ENCODE measurements at regions of chr19 and their contacts with region 1.

Region 1: GRCh38 chr19:35509861-35510625 is 3.4 kb downstream of the DMKN start:
- DNase-seq: peak; percentile 75
- ATAC-seq: peak; percentile 85
- H3K4me3 ChIP-seq: peak overlapping the region; percentile 65 to 78 (median 69)
- H3K27ac ChIP-seq: peak overlapping the region; percentile 58
- H3K4me1 ChIP-seq: peaks cover 55% of the 10 kb centered on the region
- H3K27me3 ChIP-seq: peaks cover 1 to 28% of the 10 kb centered on the region in 2 experiments; a peak in 2 of 5 replicates
- CTCF ChIP-seq: peak; percentile 97
- EP300 ChIP-seq: no peak
- POLR2A ChIP-seq: peak; percentile 23 to 50; a peak in 2 of 4 replicates
- RAD21 ChIP-seq: peak; percentile 78

Region 2: GRCh38 chr19:35318650-35319448 is 191.2 kb before region 1 on chr19:
- CTCF ChIA-PET with region 1: no interaction called
- POLR2A ChIA-PET with region 1: no interaction called
- in situ Hi-C with region 1: no loop called
- intact Hi-C with region 1: no loop called
- DNase-seq: peak; percentile 85
- ATAC-seq: peak; percentile 21; the same call in 2 of the 3 replicates
- H3K4me3 ChIP-seq: no peak overlapping the region
- H3K27ac ChIP-seq: peak overlapping the region; percentile 9
- H3K4me1 ChIP-seq: peaks cover 64% of the 10 kb centered on the region
- H3K27me3 ChIP-seq: no peaks in the 10 kb centered on the region
- CTCF ChIP-seq: no peak
- EP300 ChIP-seq: no peak
- POLR2A ChIP-seq: no peak
- RAD21 ChIP-seq: no peak

Region 3: GRCh38 chr19:35545001-35545911 is 35.2 kb after region 1 on chr19 and contains the start of gene TMEM147:
- CTCF ChIA-PET with region 1: interaction called, 5 read pairs
- POLR2A ChIA-PET with region 1: interaction called, 4 read pairs
- in situ Hi-C with region 1: no loop called
- intact Hi-C with region 1: loop called (anchors 1 kb)
- DNase-seq: peak; percentile 72
- ATAC-seq: peak; percentile 91
- H3K4me3 ChIP-seq: peak within 1 kb of the TSS; percentile 89 to 96 (median 92)
- H3K27ac ChIP-seq: peak within 1 kb of the TSS; percentile 66
- H3K4me1 ChIP-seq: peaks cover 47% of the 10 kb centered on the region
- H3K27me3 ChIP-seq: no peaks in the 10 kb centered on the region; a peak in 1 of 5 replicates
- CTCF ChIP-seq: no peak
- EP300 ChIP-seq: no peak
- POLR2A ChIP-seq: peak; percentile 59 to 83
- RAD21 ChIP-seq: peak; percentile 14; the same call in 1 of the 2 replicates
- total RNA-seq, gene TMEM147: 85.8 and 141 TPM in 2 replicates

Region 4: DNA sequence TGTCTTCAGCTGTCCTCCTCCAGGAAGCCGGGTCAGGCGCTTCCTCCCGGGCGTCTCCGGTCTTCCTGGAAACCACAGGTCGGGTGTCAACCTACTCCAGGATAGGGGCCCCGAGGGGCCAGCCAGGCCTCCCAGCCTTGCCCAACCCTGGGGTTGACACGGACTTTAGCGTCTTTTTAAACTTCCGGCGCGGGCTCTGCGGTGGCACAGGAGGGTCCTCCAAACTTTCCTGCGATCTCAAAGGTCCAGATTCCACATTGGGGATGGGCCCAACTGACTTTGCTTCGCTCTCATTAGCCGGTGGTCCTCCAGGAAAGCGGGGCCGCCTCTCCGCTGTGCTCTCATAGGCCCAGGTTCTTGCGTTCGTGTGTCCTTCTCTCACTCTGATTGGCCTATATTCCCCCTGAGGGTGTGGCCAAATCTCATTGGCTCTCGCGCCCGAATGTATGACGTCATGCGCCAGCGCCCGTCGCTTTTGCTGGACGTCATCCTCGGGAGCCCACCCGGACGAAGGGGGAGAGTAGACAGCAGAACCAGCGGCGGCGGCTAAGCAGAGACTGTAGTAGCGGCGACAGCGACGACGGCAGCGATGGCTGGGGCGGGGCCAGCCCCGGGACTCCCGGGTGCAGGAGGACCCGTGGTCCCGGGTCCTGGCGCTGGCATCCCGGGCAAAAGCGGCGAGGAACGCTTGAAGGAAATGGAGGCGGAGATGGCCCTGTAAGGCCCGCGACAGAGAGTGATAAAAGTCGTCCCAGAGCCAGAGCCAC is 118.7 kb after region 1 on chr19 and contains the start of gene RBM42:
- CTCF ChIA-PET with region 1: no interaction called
- POLR2A ChIA-PET with region 1: no interaction called
- in situ Hi-C with region 1: no loop called
- intact Hi-C with region 1: no loop called
- DNase-seq: peak; percentile 99
- ATAC-seq: peak; percentile 99
- H3K4me3 ChIP-seq: peak within 1 kb of the TSS; percentile 88 to 94 (median 88)
- H3K27ac ChIP-seq: peak within 1 kb of the TSS; percentile 90
- H3K4me1 ChIP-seq: peaks cover 18% of the 10 kb centered on the region; the same call in 1 of the 2 replicates
- H3K27me3 ChIP-seq: no peaks in the 10 kb centered on the region; a peak in 1 of 5 replicates
- CTCF ChIP-seq: no peak
- EP300 ChIP-seq: no peak; a peak in 1 of 4 replicates
- POLR2A ChIP-seq: peak; percentile 55 to 70; a peak in 3 of 4 replicates
- RAD21 ChIP-seq: peak; percentile 46
- total RNA-seq, gene RBM42: 49.7 and 55.3 TPM in 2 replicates

Region 5: GRCh38 chr19:35641515-35642151 is 131.6 kb after region 1 on chr19 and contains the start of gene ETV2:
- CTCF ChIA-PET with region 1: no interaction called
- POLR2A ChIA-PET with region 1: no interaction called
- in situ Hi-C with region 1: no loop called
- intact Hi-C with region 1: no loop called
- DNase-seq: no peak
- ATAC-seq: no peak
- H3K4me3 ChIP-seq: 0 out of 6 replicates have a peak within 1 kb of the TSS, but pooled peaks of 1 of the 3 experiments have one; percentile 81
- H3K27ac ChIP-seq: no peak within 1 kb of the TSS
- H3K4me1 ChIP-seq: peaks cover 42% of the 10 kb centered on the region
- H3K27me3 ChIP-seq: no peaks in the 10 kb centered on the region
- CTCF ChIP-seq: no peak
- EP300 ChIP-seq: no peak
- POLR2A ChIP-seq: no peak
- RAD21 ChIP-seq: no peak
- total RNA-seq, gene ETV2: 0.20 and 0.46 TPM in 2 replicates

Measured in HepG2 (cell line).